ENCODE measurements at regions of chr9 and their contacts with region 1.

Region 1: DNA sequence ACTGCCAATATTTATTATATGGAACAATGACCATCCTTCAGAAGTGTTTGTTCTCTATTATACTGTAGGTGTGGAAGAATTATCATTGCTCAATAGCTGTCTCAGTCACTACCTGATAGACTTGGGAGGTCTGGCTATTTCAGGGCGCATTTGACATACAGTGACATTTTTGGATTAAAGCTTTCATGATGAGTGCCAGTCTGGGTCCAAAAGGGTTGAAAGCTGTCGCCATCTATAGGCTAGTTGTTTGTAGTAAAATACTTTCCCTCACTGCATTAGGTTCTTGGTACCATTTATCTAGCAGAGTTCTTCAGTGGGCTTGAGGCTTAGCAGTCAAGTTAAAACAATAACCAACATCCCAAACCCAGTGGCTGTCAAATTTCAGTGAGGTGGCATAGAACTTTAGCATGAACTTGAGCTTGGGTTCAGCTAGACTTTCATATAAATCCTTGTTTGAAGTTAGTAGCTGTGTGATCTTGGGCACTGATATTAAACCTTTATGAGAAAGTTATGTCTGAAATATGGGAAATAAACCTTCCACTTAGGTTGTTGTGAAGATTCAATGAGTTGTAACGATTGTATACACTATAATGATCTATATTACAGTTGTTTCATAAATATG is 110.5 kb upstream of the CDKN2B start:
- DNase-seq: peak; percentile 53
- H3K4me3 ChIP-seq: no peak overlapping the region
- H3K27ac ChIP-seq: no peak overlapping the region
- H3K4me1 ChIP-seq: peaks cover 26% of the 10 kb centered on the region
- H3K27me3 ChIP-seq: no peaks in the 10 kb centered on the region
- CTCF ChIP-seq: peak; percentile 35 to 53
- POLR2A ChIP-seq: no peak

Region 2: GRCh38 chr9:21995177-21996086 is 124.2 kb before region 1 on chr9:
- CTCF ChIA-PET with region 1: interaction called, 22 read pairs
- POLR2A ChIA-PET with region 1: no interaction called
- dilution Hi-C with region 1: no loop called
- intact Hi-C with region 1: no loop called
- DNase-seq: peak; percentile 64
- H3K4me3 ChIP-seq: peak overlapping the region; percentile 64 to 97 (median 94)
- H3K27ac ChIP-seq: peak overlapping the region; percentile 75
- H3K4me1 ChIP-seq: peaks cover 7% of the 10 kb centered on the region
- H3K27me3 ChIP-seq: no peaks in the 10 kb centered on the region
- CTCF ChIP-seq: peak; percentile 23 to 43
- POLR2A ChIP-seq: no peak

Region 3: GRCh38 chr9:22044583-22044982 is 75.1 kb before region 1 on chr9:
- CTCF ChIA-PET with region 1: interaction called, 36 read pairs
- POLR2A ChIA-PET with region 1: no interaction called
- dilution Hi-C with region 1: no loop called
- intact Hi-C with region 1: loop called (anchors 2 kb)
- DNase-seq: peak; percentile 87
- H3K4me3 ChIP-seq: no peak overlapping the region
- H3K27ac ChIP-seq: no peak overlapping the region
- H3K4me1 ChIP-seq: peaks cover 24% of the 10 kb centered on the region
- H3K27me3 ChIP-seq: no peaks in the 10 kb centered on the region
- CTCF ChIP-seq: no peak
- POLR2A ChIP-seq: no peak

Region 4: DNA sequence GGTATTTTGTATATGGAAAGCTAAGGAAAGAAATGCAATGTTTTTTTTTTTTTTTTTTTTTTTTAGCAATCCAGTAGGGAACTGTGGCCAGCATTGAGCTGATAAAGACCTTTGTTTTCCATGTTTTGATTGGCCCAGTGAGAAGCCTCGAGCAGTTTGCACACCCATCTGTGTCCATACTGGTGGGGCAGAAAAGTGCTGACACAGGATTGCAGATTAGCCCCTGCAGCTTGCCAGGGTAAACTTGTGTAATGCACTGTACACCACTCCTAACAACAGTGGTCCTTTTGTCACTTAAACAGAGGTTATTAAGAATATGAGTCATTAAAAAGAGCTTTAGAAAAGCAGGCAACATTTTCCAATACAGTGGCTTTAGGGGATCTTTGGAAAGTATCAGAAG is 22.3 kb after region 1 on chr9:
- CTCF ChIA-PET with region 1: interaction called, 11 read pairs
- POLR2A ChIA-PET with region 1: interaction called, 6 read pairs
- dilution Hi-C with region 1: no loop called
- intact Hi-C with region 1: no loop called
- DNase-seq: peak; percentile 69
- H3K4me3 ChIP-seq: no peak overlapping the region
- H3K27ac ChIP-seq: no peak overlapping the region
- H3K4me1 ChIP-seq: peaks cover 30% of the 10 kb centered on the region
- H3K27me3 ChIP-seq: no peaks in the 10 kb centered on the region
- CTCF ChIP-seq: no peak
- POLR2A ChIP-seq: no peak

Region 5: GRCh38 chr9:22238809-22239684 is 119.4 kb after region 1 on chr9:
- CTCF ChIA-PET with region 1: interaction called, 29 read pairs
- POLR2A ChIA-PET with region 1: no interaction called
- dilution Hi-C with region 1: no loop called
- intact Hi-C with region 1: loop called (anchors 2 kb)
- DNase-seq: peak; percentile 65
- H3K4me3 ChIP-seq: no peak overlapping the region
- H3K27ac ChIP-seq: peak overlapping the region; percentile 42
- H3K4me1 ChIP-seq: peaks cover 23% of the 10 kb centered on the region
- H3K27me3 ChIP-seq: no peaks in the 10 kb centered on the region
- CTCF ChIP-seq: peak; percentile 19 to 41
- POLR2A ChIP-seq: no peak

Measured in endothelial cell of umbilical vein (primary cell).